ENCODE measurements at regions of chr16 and their contacts with region 1.

Region 1: DNA sequence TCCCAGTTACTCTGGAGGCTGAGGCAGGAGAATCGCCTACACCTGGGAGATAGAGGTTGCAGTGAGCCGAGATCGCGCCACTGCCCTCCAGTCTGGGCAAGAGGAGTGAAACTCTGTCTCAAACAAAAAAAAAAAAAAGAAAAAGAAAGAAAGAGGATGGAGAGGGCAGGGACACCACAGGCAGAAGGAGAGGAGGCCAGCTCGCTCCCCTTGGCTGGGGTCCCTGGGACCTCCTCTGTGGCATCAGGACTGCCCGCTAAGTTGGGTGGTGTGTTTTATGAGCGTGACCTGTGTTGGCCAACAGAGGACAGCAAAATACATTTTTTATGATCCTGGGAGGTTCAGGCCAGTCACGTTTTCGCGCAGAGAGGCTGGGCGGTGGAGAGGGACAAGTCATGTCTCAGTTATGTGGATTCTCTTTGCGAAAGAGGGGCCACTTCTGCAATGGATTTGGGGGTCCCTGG is 229.6 kb downstream of the MRTFB start:
- DNase-seq: peak; percentile 81
- H3K4me3 ChIP-seq: no peak overlapping the region
- H3K4me1 ChIP-seq: peaks cover 14% of the 10 kb centered on the region
- H3K27me3 ChIP-seq: no peaks in the 10 kb centered on the region

Region 2: GRCh38 chr16:14354551-14355351 is 54.0 kb after region 1 on chr16:
- in situ Hi-C with region 1: no loop called
- DNase-seq: no peak
- H3K4me3 ChIP-seq: no peak overlapping the region
- H3K4me1 ChIP-seq: no peaks in the 10 kb centered on the region
- H3K27me3 ChIP-seq: 0 out of 2 replicates have a peak, but pooled peaks cover 2% of the 10 kb centered on the region

Region 3: DNA sequence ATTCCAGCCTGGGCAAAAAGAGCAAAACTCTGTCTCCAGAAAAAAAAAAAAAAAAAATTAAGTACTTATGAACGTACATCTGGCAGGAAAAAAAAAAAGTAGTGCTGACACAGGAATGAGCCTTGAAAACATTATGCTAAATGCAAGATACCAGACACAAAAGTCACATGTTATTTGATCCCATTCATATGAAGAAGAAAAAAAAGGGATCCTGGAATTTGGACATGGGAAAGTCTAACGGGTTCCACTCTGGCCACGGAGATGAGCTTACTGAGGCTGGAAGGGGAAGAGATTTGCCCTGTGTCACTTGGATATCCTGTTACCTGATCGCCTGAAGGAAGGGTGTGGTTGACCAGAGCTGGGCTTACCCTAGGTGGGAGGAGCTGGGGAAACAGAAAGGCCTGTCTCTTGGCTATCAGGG is 77.4 kb after region 1 on chr16:
- in situ Hi-C with region 1: loop called (anchors 10 kb)
- DNase-seq: peak; percentile 4 to 45
- H3K4me3 ChIP-seq: no peak overlapping the region
- H3K4me1 ChIP-seq: no peaks in the 10 kb centered on the region
- H3K27me3 ChIP-seq: no peaks in the 10 kb centered on the region

Region 4: GRCh38 chr16:14529010-14529669 is 228.4 kb after region 1 on chr16:
- in situ Hi-C with region 1: loop called (anchors 5 kb)
- DNase-seq: peak; percentile 78 to 84
- H3K4me3 ChIP-seq: no peak overlapping the region
- H3K4me1 ChIP-seq: peaks cover 16% of the 10 kb centered on the region
- H3K27me3 ChIP-seq: no peaks in the 10 kb centered on the region

Measured in HAP-1 (cell line).